Naive thymus-derived CD4-positive, alpha-beta T cell (primary cell): ENCODE measurements at regions of chr1 and their contacts with region 1.

Region 1: GRCh38 chr1:66339944-66340343 is 194.0 kb upstream of the SGIP1 start:
- DNase-seq: peak in 2 of 9 donors; percentile 18 to 30
- ATAC-seq: no peak
- H3K4me3 ChIP-seq: peak overlapping the region; percentile 10
- H3K4me3 Mint-ChIP-seq: peak overlapping the region in 9 of 10 donors; percentile 34 to 83 (median 68)
- H3K27ac ChIP-seq: peak overlapping the region; percentile 1
- H3K27ac Mint-ChIP-seq: peak overlapping the region; percentile 43 to 92 (median 83)
- H3K4me1 ChIP-seq: peaks cover 58 to 62% of the 10 kb centered on the region in 2 donors
- H3K4me1 Mint-ChIP-seq: peaks cover 45 to 89% (median 84%) of the 10 kb centered on the region in 7 donors
- H3K27me3 ChIP-seq: no peaks in the 10 kb centered on the region
- H3K27me3 Mint-ChIP-seq: no peaks in the 10 kb centered on the region

Region 2: DNA sequence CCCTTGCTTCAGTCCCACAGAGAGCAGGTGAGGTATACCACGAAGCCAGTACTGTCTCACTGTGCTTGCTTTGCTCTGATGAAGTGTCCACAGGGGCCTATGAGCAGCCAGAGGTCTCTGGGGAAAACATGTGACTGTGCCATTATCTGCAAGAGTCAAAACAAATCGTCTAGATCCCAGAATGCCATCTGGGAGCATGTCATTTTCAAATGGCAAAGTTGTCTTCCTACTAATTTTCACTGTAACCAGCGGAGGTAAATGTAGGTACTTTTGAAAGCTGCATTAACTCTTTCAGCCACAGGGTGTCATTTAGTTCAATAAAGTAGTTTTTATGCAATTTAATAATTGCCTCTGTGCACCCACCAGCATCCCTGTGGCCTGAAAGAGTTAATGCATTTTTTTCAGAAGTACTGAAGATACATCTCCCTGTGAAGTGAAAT is 20.4 kb after region 1 on chr1:
- CTCF ChIA-PET with region 1: interaction called, 4 read pairs
- POLR2A ChIA-PET with region 1: interaction called, 12 read pairs
- intact Hi-C with region 1: no loop called
- DNase-seq: no peak
- ATAC-seq: no peak
- H3K4me3 ChIP-seq: no peak overlapping the region
- H3K4me3 Mint-ChIP-seq: no peak overlapping the region
- H3K27ac ChIP-seq: no peak overlapping the region
- H3K27ac Mint-ChIP-seq: peak overlapping the region in 3 of 9 donors; percentile 45 to 72 (median 58)
- H3K4me1 ChIP-seq: peaks cover 40 to 51% of the 10 kb centered on the region in 2 donors
- H3K4me1 Mint-ChIP-seq: peaks cover 40 to 80% (median 65%) of the 10 kb centered on the region in 7 donors
- H3K27me3 ChIP-seq: no peaks in the 10 kb centered on the region
- H3K27me3 Mint-ChIP-seq: no peaks in the 10 kb centered on the region